Adrenal gland (tissue), 19 donors: ENCODE measurements at regions of chr7 and their contacts with region 1.

Region 1: DNA sequence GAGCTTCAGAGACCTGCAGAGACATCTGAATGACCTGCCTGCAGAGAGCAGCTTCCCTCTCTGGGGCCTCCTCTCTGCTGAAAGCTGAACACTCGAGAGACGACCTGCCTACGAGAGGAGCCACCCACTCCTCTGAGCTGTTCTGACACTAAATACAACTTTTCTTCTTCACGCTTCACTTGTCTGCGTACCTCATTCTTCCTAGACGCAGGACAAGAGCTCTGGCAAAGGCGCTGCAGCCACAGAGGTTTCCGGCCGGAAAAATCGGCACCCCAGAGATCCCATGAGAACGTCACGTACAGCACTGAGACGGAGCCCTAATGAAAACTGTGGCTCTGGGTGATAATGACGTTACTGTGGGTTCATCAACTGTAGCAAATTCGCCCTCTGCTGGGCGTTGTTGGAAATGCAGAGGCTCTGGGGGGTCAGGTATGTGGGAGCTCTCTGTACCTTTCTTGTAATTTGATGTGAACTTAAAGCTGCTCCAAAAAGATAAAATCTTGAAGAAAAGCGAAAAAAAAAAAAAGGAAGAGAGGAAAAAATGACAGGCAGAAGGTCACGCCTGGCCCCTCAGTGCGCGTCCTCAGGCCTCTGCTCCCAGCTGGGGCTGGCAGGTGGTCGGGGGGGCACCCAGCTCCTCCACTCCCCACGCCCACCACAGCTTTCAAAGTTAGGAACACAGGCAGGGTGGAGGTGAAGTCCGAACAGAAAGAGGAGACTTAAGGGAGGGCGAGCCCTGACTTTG is 120.7 kb downstream of the DYNC2I1 start:
- DNase-seq: peak; percentile 61 to 93 (median 80)
- H3K4me3 ChIP-seq: peak overlapping the region in 1 of 4 donors; percentile 48
- H3K27ac ChIP-seq: peak overlapping the region in 2 of 5 donors; percentile 60 to 70
- H3K4me1 ChIP-seq: peaks cover 0 to 14% of the 10 kb centered on the region in 2 donors
- H3K27me3 ChIP-seq: no peaks in the 10 kb centered on the region
- CTCF ChIP-seq: peak; percentile 70 to 93 (median 86)
- POLR2A ChIP-seq: no peak

Region 2: DNA sequence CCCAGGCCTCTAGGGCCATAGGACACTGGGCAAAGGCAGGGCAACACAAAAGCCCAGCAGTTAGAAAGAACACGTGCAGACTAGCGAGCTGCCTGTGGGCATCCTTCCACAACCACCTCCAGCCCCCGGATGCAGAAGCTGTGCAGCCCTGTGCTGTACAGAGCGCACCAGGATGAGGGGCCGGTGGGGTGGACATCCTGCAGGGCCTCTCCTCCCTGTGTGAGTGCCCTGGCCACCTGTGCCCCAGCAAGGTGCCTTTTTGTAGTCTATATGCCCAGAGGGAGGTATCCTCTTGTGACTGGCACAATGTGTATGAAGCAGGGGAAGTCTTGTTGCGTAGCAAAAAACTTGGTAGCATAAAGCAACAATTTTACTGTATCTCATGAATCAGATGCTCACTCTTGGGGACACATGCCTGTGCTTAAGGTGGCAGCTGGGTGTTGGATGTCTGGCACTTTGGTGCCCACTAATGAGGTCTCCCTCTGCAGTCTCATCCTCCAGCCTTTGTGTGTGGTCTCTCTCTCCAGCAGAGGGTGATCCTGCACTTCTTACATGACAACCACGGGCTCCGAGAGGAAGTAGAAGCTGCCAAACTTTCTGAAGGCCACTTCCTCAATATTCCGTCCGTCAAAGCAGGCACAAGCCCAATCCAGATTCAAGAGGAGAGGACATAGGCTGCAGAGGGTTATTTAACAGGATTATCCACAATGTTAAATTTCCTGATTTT is 281.1 kb before region 1 on chr7:
- intact Hi-C with region 1: loop called (anchors 10 kb)
- DNase-seq: peak; percentile 76 to 93 (median 86)
- H3K4me3 ChIP-seq: peak overlapping the region in 1 of 4 donors; percentile 13
- H3K27ac ChIP-seq: peak overlapping the region in 1 of 5 donors; percentile 53
- H3K4me1 ChIP-seq: peaks cover 3 to 7% of the 10 kb centered on the region in 2 donors
- H3K27me3 ChIP-seq: no peaks in the 10 kb centered on the region
- CTCF ChIP-seq: peak; percentile 33 to 88 (median 73)
- POLR2A ChIP-seq: no peak